CD4-positive, alpha-beta memory T cell (primary cell): ENCODE measurements at regions of chr2 and their contacts with region 1.

Region 1: DNA sequence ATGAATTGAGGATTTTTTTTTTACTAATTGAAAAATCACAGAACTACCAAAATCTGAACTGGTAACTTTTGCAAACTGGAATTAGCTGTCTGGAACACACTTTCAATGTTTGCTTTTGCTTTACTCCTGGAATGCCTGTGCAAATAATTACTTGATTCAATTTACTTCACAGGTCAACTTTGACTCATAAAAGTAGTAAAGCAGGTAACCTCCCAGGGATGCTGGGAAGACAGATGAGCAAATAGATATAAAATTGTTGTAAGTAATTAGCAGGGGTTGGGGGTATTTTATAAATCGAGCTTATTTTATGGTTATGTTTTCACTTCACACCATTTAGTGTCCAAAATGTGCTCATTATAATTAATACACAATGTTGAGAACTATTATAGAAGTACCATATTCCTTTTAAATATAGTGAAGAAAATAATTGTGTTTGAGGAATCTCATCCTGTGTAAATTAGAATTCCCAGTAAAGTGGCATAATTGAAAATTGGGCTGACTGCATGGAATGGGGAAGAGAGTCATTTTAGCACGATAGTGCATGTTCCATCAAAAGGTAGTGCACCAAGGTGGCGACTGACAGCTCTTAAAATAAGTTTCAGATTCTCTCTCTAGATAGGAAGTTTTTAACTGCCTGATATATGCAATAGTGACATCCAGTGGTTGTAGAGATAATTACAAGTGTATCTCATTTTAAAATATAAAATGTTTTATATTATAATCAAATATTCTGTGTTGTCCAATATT is 398.1 kb upstream of the HNRNPA3 start:
- DNase-seq: peak in 4 of 5 donors; percentile 22 to 34 (median 30)
- H3K4me3 ChIP-seq: no peak overlapping the region
- H3K4me3 Mint-ChIP-seq: peak overlapping the region in 3 of 8 donors; percentile 21 to 52 (median 24)
- H3K27ac ChIP-seq: no peak overlapping the region
- H3K27ac Mint-ChIP-seq: no peak overlapping the region
- H3K4me1 ChIP-seq: no peaks in the 10 kb centered on the region
- H3K4me1 Mint-ChIP-seq: peaks cover 0 to 5% (median 2%) of the 10 kb centered on the region in 4 donors
- H3K27me3 ChIP-seq: no peaks in the 10 kb centered on the region
- H3K27me3 Mint-ChIP-seq: peaks cover 0 to 4% of the 10 kb centered on the region in 2 donors

Region 2: GRCh38 chr2:176685911-176686310 is 128.6 kb before region 1 on chr2:
- CTCF ChIA-PET with region 1: no interaction called
- POLR2A ChIA-PET with region 1: no interaction called
- intact Hi-C with region 1: no loop called
- DNase-seq: no peak
- H3K4me3 ChIP-seq: no peak overlapping the region
- H3K4me3 Mint-ChIP-seq: no peak overlapping the region
- H3K27ac ChIP-seq: no peak overlapping the region
- H3K27ac Mint-ChIP-seq: no peak overlapping the region
- H3K4me1 ChIP-seq: no peaks in the 10 kb centered on the region
- H3K4me1 Mint-ChIP-seq: no peaks in the 10 kb centered on the region
- H3K27me3 ChIP-seq: no peaks in the 10 kb centered on the region
- H3K27me3 Mint-ChIP-seq: peaks cover 3 to 12% of the 10 kb centered on the region in 2 donors

Region 3: DNA sequence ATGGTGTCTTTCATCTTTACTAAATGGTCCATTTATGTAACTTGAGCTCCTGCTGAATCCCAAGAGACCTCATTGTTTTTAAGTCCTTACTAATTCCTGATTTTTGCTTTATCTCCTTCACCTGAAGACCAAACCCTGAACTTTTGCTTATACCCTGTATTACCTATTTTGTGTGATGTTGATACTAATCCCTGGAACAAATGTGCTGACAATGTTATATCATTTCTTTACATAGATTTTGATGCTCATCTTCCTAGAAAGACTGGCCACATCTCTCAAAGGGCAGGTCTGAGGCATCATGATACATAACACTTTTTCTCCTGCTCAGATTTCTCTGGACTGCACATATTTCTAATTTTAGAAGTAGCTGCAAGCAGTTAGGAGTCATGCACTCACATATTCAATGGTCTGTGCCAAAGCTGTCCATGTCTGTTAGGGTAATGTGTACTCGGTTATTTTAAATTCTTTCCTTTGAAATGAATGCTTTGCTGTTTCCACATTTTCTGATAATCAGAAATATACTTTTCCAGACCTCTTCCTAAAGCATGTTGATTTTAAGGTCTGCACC is 29.8 kb before region 1 on chr2:
- CTCF ChIA-PET with region 1: no interaction called
- POLR2A ChIA-PET with region 1: no interaction called
- intact Hi-C with region 1: no loop called
- DNase-seq: no peak
- H3K4me3 ChIP-seq: no peak overlapping the region
- H3K4me3 Mint-ChIP-seq: no peak overlapping the region
- H3K27ac ChIP-seq: no peak overlapping the region
- H3K27ac Mint-ChIP-seq: no peak overlapping the region
- H3K4me1 ChIP-seq: peaks cover 5% of the 10 kb centered on the region
- H3K4me1 Mint-ChIP-seq: peaks cover 3 to 16% (median 6%) of the 10 kb centered on the region in 4 donors
- H3K27me3 ChIP-seq: no peaks in the 10 kb centered on the region
- H3K27me3 Mint-ChIP-seq: peaks cover 1 to 8% of the 10 kb centered on the region in 2 donors

Region 4: GRCh38 chr2:176804392-176804791 is 10.1 kb before region 1 on chr2:
- CTCF ChIA-PET with region 1: interaction called, 32 read pairs
- POLR2A ChIA-PET with region 1: interaction called, 3 read pairs
- intact Hi-C with region 1: loop called (anchors 2 kb)
- DNase-seq: no peak
- H3K4me3 ChIP-seq: no peak overlapping the region
- H3K4me3 Mint-ChIP-seq: no peak overlapping the region
- H3K27ac ChIP-seq: no peak overlapping the region
- H3K27ac Mint-ChIP-seq: no peak overlapping the region
- H3K4me1 ChIP-seq: no peaks in the 10 kb centered on the region
- H3K4me1 Mint-ChIP-seq: no peaks in the 10 kb centered on the region
- H3K27me3 ChIP-seq: no peaks in the 10 kb centered on the region
- H3K27me3 Mint-ChIP-seq: no peaks in the 10 kb centered on the region